CD8-positive, alpha-beta T cell (primary cell): ENCODE measurements at regions of chrX and their contacts with region 1.

Region 1: DNA sequence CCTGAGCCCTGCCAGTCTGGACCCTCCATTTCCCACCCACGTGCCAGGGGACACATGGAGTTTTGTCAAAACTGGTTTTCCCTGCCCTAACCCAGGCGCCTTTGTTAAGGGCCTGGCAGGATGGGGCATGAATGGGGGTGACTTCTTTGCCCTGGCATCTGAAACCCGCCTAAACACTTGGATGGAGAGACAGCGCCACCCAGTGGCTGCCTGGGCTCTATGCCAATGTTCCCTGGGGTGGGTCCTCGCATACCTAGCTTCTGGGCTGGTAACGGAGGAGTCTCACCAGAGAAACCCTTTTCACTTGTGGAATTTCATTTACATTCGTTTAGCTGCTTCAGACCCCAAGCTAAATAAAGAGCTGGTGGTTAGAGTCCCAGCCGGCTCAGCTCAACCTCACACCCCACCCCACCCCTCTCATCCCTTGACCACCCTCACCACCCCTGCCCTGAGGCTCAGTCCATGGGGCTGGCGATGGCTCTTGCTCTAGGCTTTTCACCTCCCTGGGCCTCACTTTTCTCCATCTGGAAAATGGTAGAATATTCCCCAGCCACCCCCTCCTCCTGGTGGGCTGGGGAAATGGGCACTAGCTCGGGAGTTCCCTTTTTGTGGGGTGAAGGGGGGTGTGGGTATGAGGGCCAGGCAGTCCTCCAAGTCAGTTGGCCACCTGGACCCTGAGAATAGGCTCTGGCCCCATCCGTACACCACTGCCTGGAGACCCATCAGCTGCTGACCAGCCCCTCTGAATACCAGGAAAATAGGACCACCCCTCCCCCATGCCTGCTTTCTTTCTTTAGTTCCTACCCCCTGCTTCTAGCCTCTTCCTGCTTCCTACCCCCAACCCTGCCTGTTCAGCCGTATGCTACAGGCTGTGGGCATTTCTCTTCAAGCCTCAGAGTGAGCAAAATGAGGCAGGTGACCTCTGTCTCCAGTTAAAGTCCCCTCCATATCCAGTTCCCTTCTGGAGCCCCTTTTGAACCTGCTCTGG is 57.1 kb upstream of the PJA1 start:
- DNase-seq: peak; percentile 45 to 85 (median 76)
- ATAC-seq: peak; percentile 77
- H3K4me3 ChIP-seq: no peak overlapping the region
- H3K4me3 Mint-ChIP-seq: no peak overlapping the region
- H3K27ac ChIP-seq: no peak overlapping the region
- H3K27ac Mint-ChIP-seq: no peak overlapping the region
- H3K4me1 ChIP-seq: no peaks in the 10 kb centered on the region
- H3K4me1 Mint-ChIP-seq: no peaks in the 10 kb centered on the region
- H3K27me3 ChIP-seq: no peaks in the 10 kb centered on the region
- H3K27me3 Mint-ChIP-seq: no peaks in the 10 kb centered on the region
- CTCF ChIP-seq: peak; percentile 57

Region 2: DNA sequence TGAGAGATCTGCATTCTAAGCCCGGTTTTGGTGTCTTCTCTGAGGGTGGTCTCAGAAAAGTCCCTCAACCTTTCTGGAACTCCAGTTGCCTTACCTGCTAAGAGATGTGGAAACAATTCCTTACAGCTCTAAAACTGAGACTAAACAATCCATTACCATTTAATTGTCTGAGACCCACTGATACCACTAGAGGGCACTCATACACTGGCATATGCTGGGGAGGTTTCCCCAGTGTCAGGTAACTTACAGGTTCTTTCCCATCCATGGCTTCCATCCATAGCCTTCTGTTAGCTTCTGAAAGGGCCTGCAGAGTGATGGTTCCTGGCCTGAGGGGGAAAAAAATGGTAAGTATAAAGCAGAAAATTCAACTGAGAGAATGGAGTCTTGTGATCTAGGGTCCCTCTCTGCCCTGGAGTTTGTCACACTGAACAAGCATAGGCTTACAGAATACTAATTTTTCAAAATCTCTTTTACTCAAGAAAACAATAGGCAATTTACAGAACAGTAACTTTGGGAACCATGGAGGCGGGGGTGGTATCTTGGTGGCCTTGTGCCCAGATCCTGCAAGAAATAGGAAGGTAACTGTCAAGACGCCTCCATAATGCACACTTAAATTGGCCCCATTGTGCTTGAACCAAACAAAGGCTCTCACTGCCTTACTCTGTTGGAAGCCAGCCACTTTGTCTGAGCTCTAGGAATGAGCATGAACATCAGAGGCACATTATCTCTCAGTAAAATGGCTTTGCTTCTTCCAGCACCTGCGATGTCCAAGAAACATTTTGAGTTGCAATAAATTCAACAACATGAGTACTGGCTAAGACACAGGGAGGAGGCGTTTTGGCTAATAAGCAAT is 1025.2 kb before region 1 on chrX:
- CTCF ChIA-PET with region 1: no interaction called
- POLR2A ChIA-PET with region 1: no interaction called
- intact Hi-C with region 1: loop called in 1 of 2 experiments (anchors 5 kb)
- DNase-seq: peak in 3 of 9 experiments; percentile 10 to 43 (median 30)
- ATAC-seq: no peak
- H3K4me3 ChIP-seq: no peak overlapping the region
- H3K4me3 Mint-ChIP-seq: no peak overlapping the region
- H3K27ac ChIP-seq: no peak overlapping the region
- H3K27ac Mint-ChIP-seq: no peak overlapping the region
- H3K4me1 ChIP-seq: no peaks in the 10 kb centered on the region
- H3K4me1 Mint-ChIP-seq: no peaks in the 10 kb centered on the region
- H3K27me3 ChIP-seq: no peaks in the 10 kb centered on the region
- H3K27me3 Mint-ChIP-seq: no peaks in the 10 kb centered on the region
- CTCF ChIP-seq: no peak

Region 3: GRCh38 chrX:68511255-68511654 is 711.1 kb before region 1 on chrX:
- CTCF ChIA-PET with region 1: no interaction called
- POLR2A ChIA-PET with region 1: no interaction called
- intact Hi-C with region 1: loop called in 1 of 2 experiments (anchors 5 kb)
- DNase-seq: peak in 3 of 9 experiments; percentile 33 to 57 (median 49)
- ATAC-seq: peak; percentile 39
- H3K4me3 ChIP-seq: no peak overlapping the region
- H3K4me3 Mint-ChIP-seq: no peak overlapping the region
- H3K27ac ChIP-seq: no peak overlapping the region
- H3K27ac Mint-ChIP-seq: no peak overlapping the region
- H3K4me1 ChIP-seq: peaks cover 3% of the 10 kb centered on the region
- H3K4me1 Mint-ChIP-seq: peaks cover 27% of the 10 kb centered on the region
- H3K27me3 ChIP-seq: no peaks in the 10 kb centered on the region
- H3K27me3 Mint-ChIP-seq: no peaks in the 10 kb centered on the region
- CTCF ChIP-seq: peak; percentile 73

Region 4: DNA sequence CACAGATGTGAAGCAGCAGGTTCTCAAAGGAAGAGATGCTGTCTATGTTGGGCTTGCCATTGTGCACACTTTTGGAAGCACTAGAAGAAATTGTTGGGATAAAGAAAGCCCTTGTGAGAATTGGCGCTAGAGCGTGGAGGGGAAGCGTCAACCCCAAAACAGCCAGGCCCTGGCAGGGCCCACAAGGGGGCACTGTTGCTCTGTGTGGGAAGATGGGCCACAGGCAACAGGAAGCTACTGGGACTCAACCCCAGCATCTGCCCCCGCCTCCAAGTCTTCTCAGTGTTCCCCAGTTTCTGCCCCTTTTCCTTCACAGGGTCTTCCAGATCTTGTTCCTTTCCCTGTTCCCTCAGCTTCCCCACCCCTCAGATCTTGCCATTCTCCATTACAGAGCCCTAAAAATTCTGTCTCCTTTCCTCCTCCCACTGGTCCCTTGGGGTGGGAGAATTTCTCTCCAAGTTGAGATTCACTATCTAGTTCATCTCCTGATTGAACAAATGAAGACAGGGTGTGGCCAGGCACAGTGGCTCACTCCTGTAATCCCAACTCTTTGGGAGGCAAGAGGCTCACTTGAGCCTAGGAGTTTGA is 489.4 kb before region 1 on chrX:
- CTCF ChIA-PET with region 1: interaction called, 11 read pairs
- POLR2A ChIA-PET with region 1: no interaction called
- intact Hi-C with region 1: loop called in 1 of 2 experiments (anchors 1 kb)
- DNase-seq: peak; percentile 14 to 70 (median 48)
- ATAC-seq: no peak
- H3K4me3 ChIP-seq: no peak overlapping the region
- H3K4me3 Mint-ChIP-seq: no peak overlapping the region
- H3K27ac ChIP-seq: no peak overlapping the region
- H3K27ac Mint-ChIP-seq: no peak overlapping the region
- H3K4me1 ChIP-seq: no peaks in the 10 kb centered on the region
- H3K4me1 Mint-ChIP-seq: no peaks in the 10 kb centered on the region
- H3K27me3 ChIP-seq: no peaks in the 10 kb centered on the region
- H3K27me3 Mint-ChIP-seq: peaks cover 11% of the 10 kb centered on the region
- CTCF ChIP-seq: peak; percentile 27

Region 5: GRCh38 chrX:69093960-69094871 is 128.2 kb before region 1 on chrX:
- CTCF ChIA-PET with region 1: interaction called, 6 read pairs
- POLR2A ChIA-PET with region 1: no interaction called
- intact Hi-C with region 1: loop called (anchors 1 kb)
- DNase-seq: peak in 6 of 9 experiments; percentile 3 to 52 (median 32)
- ATAC-seq: no peak
- H3K4me3 ChIP-seq: no peak overlapping the region
- H3K4me3 Mint-ChIP-seq: no peak overlapping the region
- H3K27ac ChIP-seq: no peak overlapping the region
- H3K27ac Mint-ChIP-seq: no peak overlapping the region
- H3K4me1 ChIP-seq: no peaks in the 10 kb centered on the region
- H3K4me1 Mint-ChIP-seq: no peaks in the 10 kb centered on the region
- H3K27me3 ChIP-seq: no peaks in the 10 kb centered on the region
- H3K27me3 Mint-ChIP-seq: no peaks in the 10 kb centered on the region
- CTCF ChIP-seq: no peak

Region 6: DNA sequence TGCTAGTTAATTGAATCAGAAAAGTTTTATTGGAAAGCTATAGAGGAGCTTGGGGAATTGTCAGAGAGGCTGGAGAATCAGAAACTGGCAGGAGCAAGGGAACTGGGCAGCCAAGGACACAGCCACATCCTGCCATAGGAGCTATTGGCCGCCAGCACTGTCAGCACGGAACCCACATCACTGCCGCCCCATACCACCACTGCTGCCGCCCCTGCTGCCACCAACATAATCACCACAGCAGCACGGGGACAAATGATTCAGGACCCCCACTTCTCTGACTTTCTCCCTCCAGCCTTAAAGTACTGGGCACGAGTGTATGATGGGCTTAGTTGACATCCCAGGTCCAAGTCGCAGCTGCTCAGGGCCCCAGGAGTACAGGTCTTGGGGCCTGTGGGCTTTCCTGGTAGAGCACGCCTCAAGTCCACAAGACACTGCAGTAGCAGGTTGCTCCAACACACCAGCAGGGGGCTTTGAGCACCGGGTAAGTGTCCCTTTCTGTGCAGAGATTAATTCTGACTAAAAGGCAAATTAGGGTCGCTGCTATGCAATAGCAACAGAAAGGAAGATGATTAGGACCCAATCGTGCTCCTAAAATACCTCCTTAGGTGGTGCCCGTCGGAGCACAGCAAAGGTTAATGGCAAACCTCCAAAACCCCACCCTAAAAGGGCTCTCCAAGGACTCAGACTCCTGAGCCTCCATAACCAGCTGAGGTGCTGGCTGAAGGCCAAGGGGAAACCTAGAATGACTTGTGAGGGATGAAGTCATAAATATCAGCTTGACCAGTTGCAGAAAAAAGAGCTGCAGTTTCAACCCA is 64.0 kb before region 1 on chrX:
- CTCF ChIA-PET with region 1: interaction called, 17 read pairs
- POLR2A ChIA-PET with region 1: no interaction called
- intact Hi-C with region 1: loop called (anchors 1 kb)
- DNase-seq: peak in 7 of 9 experiments; percentile 11 to 57 (median 45)
- ATAC-seq: peak; percentile 64
- H3K4me3 ChIP-seq: no peak overlapping the region
- H3K4me3 Mint-ChIP-seq: no peak overlapping the region
- H3K27ac ChIP-seq: no peak overlapping the region
- H3K27ac Mint-ChIP-seq: no peak overlapping the region
- H3K4me1 ChIP-seq: peaks cover 15% of the 10 kb centered on the region
- H3K4me1 Mint-ChIP-seq: peaks cover 22% of the 10 kb centered on the region
- H3K27me3 ChIP-seq: no peaks in the 10 kb centered on the region
- H3K27me3 Mint-ChIP-seq: no peaks in the 10 kb centered on the region
- CTCF ChIP-seq: peak; percentile 38